HEK293 (cell line): ENCODE measurements at regions of chr1 and their contacts with region 1.

Region 1: DNA sequence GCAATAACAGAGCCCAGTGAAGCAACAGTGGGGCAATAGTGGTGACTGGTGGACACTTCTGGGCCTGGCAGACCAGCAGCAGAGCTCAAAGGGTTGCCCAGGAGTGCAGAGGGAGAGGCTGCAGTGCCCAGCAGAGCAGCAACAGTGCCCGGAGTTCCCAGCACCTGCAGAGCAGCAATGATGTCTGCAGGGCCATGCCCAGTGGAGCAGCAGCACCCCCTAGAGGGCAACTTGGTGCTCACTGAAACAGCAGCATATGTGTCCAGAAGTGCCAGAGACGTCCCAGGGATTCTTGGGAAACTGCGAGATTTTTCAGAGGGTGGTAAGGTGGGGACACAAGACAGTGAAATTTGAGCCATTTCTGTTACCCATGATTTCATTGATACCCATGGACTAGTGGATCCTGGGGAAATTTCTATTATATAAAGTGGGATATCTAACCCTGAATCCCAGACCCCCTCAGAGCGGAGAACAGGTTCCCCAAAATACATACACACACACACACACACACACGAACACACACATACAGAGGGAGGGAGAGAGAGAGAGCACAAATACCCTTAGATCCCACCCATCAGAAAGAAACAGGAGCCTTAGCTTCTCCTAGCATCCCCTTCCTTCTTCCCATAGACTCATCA is 156.9 kb upstream of the GJB5 start:
- H3K4me3 ChIP-seq: no peak overlapping the region
- H3K27ac ChIP-seq: no peak overlapping the region
- H3K4me1 ChIP-seq: no peaks in the 10 kb centered on the region
- CTCF ChIP-seq: peak; percentile 88

Region 2: GRCh38 chr1:34342334-34342733 is 255.7 kb before region 1 on chr1:
- CTCF ChIA-PET with region 1: interaction called, 16 read pairs
- POLR2A ChIA-PET with region 1: no interaction called
- H3K4me3 ChIP-seq: no peak overlapping the region
- H3K27ac ChIP-seq: no peak overlapping the region
- H3K4me1 ChIP-seq: no peaks in the 10 kb centered on the region
- CTCF ChIP-seq: no peak

Region 3: GRCh38 chr1:34460193-34460592 is 137.8 kb before region 1 on chr1:
- CTCF ChIA-PET with region 1: interaction called, 16 read pairs
- POLR2A ChIA-PET with region 1: no interaction called
- H3K4me3 ChIP-seq: no peak overlapping the region
- H3K27ac ChIP-seq: no peak overlapping the region
- H3K4me1 ChIP-seq: no peaks in the 10 kb centered on the region
- CTCF ChIP-seq: no peak

Region 4: GRCh38 chr1:34549199-34549598 is 48.8 kb before region 1 on chr1:
- CTCF ChIA-PET with region 1: interaction called, 19 read pairs
- POLR2A ChIA-PET with region 1: no interaction called
- H3K4me3 ChIP-seq: no peak overlapping the region
- H3K27ac ChIP-seq: no peak overlapping the region
- H3K4me1 ChIP-seq: no peaks in the 10 kb centered on the region
- CTCF ChIP-seq: no peak